Natural killer cell (primary cell): ENCODE measurements at regions of chr9 and their contacts with region 1.

Region 1: GRCh38 chr9:75238311-75238978 is 150.1 kb downstream of the OSTF1 start:
- DNase-seq: peak; percentile 26 to 75
- ATAC-seq: peak; percentile 78 to 99 (median 97)
- H3K4me3 ChIP-seq: no peak overlapping the region
- H3K4me3 Mint-ChIP-seq: no peak overlapping the region
- H3K27ac ChIP-seq: no peak overlapping the region
- H3K27ac Mint-ChIP-seq: no peak overlapping the region
- H3K4me1 ChIP-seq: no peaks in the 10 kb centered on the region
- H3K4me1 Mint-ChIP-seq: no peaks in the 10 kb centered on the region
- H3K27me3 ChIP-seq: no peaks in the 10 kb centered on the region
- H3K27me3 Mint-ChIP-seq: no peaks in the 10 kb centered on the region
- CTCF ChIP-seq: peak; percentile 66

Region 2: GRCh38 chr9:74773886-74774479 is 464.5 kb before region 1 on chr9:
- intact Hi-C with region 1: loop called (anchors 1 kb)
- DNase-seq: peak; percentile 61 to 84
- ATAC-seq: peak; percentile 75 to 87 (median 83)
- H3K4me3 ChIP-seq: no peak overlapping the region
- H3K4me3 Mint-ChIP-seq: no peak overlapping the region
- H3K27ac ChIP-seq: no peak overlapping the region
- H3K27ac Mint-ChIP-seq: no peak overlapping the region
- H3K4me1 ChIP-seq: no peaks in the 10 kb centered on the region
- H3K4me1 Mint-ChIP-seq: no peaks in the 10 kb centered on the region
- H3K27me3 ChIP-seq: peaks cover 3% of the 10 kb centered on the region
- H3K27me3 Mint-ChIP-seq: peaks cover 13 to 18% of the 10 kb centered on the region in 2 donors
- CTCF ChIP-seq: peak; percentile 98

Region 3: GRCh38 chr9:75083188-75083970 is 155.1 kb before region 1 on chr9:
- intact Hi-C with region 1: loop called (anchors 1 kb)
- DNase-seq: peak; percentile 43 to 71
- ATAC-seq: peak in 2 of 3 donors; percentile 31 to 50
- H3K4me3 ChIP-seq: no peak overlapping the region
- H3K4me3 Mint-ChIP-seq: no peak overlapping the region
- H3K27ac ChIP-seq: peak overlapping the region; percentile 47
- H3K27ac Mint-ChIP-seq: peak overlapping the region; percentile 21 to 68
- H3K4me1 ChIP-seq: peaks cover 19% of the 10 kb centered on the region
- H3K4me1 Mint-ChIP-seq: peaks cover 33 to 58% of the 10 kb centered on the region in 2 donors
- H3K27me3 ChIP-seq: no peaks in the 10 kb centered on the region
- H3K27me3 Mint-ChIP-seq: no peaks in the 10 kb centered on the region
- CTCF ChIP-seq: no peak

Region 4: DNA sequence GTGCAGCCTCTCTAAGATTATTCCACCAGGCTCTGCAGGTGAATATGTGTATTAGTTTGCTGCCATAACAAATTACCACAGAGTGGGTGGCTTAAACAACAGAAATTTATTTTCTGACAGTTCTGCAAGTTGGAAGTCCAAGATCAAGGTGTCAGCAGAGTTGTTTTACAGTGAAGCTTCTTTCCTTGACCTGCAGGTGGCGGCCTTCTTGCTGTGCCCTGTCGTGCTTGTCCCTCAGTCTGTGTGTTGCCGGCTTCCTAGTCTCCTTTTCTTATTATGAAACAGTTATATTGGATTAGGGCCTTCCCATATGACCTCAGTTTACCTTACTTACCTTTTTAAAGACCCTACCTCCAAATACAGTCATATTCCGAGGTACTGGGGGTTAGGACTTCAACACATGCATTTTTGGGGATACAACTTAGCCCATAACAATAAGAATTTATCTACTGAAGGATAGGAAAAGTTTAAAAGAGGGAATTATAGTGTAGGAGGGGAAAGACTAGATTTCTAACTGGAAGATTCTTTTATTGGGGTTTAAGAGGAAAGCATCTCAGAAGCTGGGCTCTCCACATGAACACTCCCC is 52.8 kb before region 1 on chr9:
- intact Hi-C with region 1: loop called (anchors 2 kb)
- DNase-seq: peak; percentile 25 to 67
- ATAC-seq: peak; percentile 65 to 80 (median 70)
- H3K4me3 ChIP-seq: no peak overlapping the region
- H3K4me3 Mint-ChIP-seq: no peak overlapping the region
- H3K27ac ChIP-seq: no peak overlapping the region
- H3K27ac Mint-ChIP-seq: peak overlapping the region; percentile 50 to 75
- H3K4me1 ChIP-seq: no peaks in the 10 kb centered on the region
- H3K4me1 Mint-ChIP-seq: peaks cover 32 to 36% of the 10 kb centered on the region in 2 donors
- H3K27me3 ChIP-seq: no peaks in the 10 kb centered on the region
- H3K27me3 Mint-ChIP-seq: no peaks in the 10 kb centered on the region
- CTCF ChIP-seq: peak; percentile 64

Region 5: GRCh38 chr9:75200892-75201470 is 37.5 kb before region 1 on chr9:
- intact Hi-C with region 1: loop called (anchors 1 kb)
- DNase-seq: peak in 1 of 2 donors; percentile 70
- ATAC-seq: peak in 2 of 3 donors; percentile 46 to 59
- H3K4me3 ChIP-seq: no peak overlapping the region
- H3K4me3 Mint-ChIP-seq: no peak overlapping the region
- H3K27ac ChIP-seq: no peak overlapping the region
- H3K27ac Mint-ChIP-seq: peak overlapping the region in 1 of 2 donors; percentile 40
- H3K4me1 ChIP-seq: no peaks in the 10 kb centered on the region
- H3K4me1 Mint-ChIP-seq: peaks cover 6 to 13% of the 10 kb centered on the region in 2 donors
- H3K27me3 ChIP-seq: no peaks in the 10 kb centered on the region
- H3K27me3 Mint-ChIP-seq: no peaks in the 10 kb centered on the region
- CTCF ChIP-seq: peak; percentile 72

Region 6: GRCh38 chr9:75570538-75570937 is 332.1 kb after region 1 on chr9:
- intact Hi-C with region 1: no loop called
- DNase-seq: no peak
- ATAC-seq: no peak
- H3K4me3 ChIP-seq: no peak overlapping the region
- H3K4me3 Mint-ChIP-seq: no peak overlapping the region
- H3K27ac ChIP-seq: no peak overlapping the region
- H3K27ac Mint-ChIP-seq: no peak overlapping the region
- H3K4me1 ChIP-seq: no peaks in the 10 kb centered on the region
- H3K4me1 Mint-ChIP-seq: no peaks in the 10 kb centered on the region
- H3K27me3 ChIP-seq: no peaks in the 10 kb centered on the region
- H3K27me3 Mint-ChIP-seq: no peaks in the 10 kb centered on the region
- CTCF ChIP-seq: no peak